ENCODE measurements at regions of chr1 and their contacts with region 1.

Region 1: GRCh38 chr1:17922833-17923232 is 167.7 kb downstream of the ACTL8 start:
- H3K4me3 ChIP-seq: no peak overlapping the region
- H3K27ac ChIP-seq: no peak overlapping the region
- H3K4me1 ChIP-seq: no peaks in the 10 kb centered on the region
- CTCF ChIP-seq: peak; percentile 23; the same call in 1 of the 2 replicates

Region 2: GRCh38 chr1:17909634-17910033 is 13.2 kb before region 1 on chr1:
- CTCF ChIA-PET with region 1: interaction called, 14 read pairs
- POLR2A ChIA-PET with region 1: no interaction called
- H3K4me3 ChIP-seq: no peak overlapping the region
- H3K27ac ChIP-seq: no peak overlapping the region
- H3K4me1 ChIP-seq: 0 out of 2 replicates have a peak, but pooled peaks cover 4% of the 10 kb centered on the region
- CTCF ChIP-seq: 0 out of 2 replicates have a peak, but pooled peaks have one; percentile 9

Region 3: DNA sequence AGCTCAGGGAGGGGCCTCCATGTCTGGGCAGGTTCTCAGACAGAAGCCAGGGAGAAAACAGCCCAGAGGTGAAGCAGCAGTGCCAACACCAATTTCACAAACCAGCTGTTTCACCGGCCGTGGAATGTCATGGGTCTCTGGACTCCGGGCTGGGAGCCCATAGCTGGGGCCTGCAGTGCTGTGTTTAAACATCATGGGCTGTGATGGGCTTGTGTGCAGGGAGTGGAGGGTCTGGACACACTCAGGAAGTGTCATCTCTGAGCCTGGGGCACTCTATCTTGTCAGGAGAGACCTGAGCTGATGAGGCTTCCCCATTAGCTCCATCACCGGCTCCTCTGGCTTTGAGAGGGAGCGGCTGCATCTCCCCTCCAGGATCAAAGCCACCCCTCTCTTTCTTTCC is 11.1 kb after region 1 on chr1:
- CTCF ChIA-PET with region 1: interaction called, 10 read pairs
- POLR2A ChIA-PET with region 1: no interaction called
- H3K4me3 ChIP-seq: no peak overlapping the region
- H3K27ac ChIP-seq: no peak overlapping the region
- H3K4me1 ChIP-seq: no peaks in the 10 kb centered on the region
- CTCF ChIP-seq: no peak

Region 4: DNA sequence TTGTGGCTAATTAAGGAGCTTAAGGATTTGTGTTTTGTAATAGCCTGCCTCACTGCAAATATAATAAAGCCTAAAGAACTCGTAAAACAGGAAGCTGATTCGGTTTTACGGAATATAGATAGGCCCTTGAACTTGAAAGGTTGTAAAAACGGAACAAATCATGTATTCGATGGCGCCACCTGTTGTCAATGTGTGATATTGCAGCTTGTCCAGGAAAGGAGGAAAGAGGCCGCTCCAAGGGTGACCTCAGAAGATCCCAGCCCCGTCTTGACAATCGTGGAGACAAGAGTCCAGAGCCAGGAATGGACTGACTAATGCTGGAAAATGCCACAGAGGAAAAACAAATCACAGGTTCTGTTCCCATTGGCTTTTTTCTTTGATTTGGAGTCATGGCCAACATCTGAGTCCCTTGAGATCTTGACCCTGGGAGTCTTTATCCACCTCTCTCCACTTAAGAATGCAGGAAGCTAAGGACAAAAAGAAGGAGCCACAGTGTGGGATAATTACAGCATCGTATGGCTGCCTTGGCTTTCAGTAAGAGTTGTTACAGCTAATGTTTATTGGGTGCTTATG is 177.7 kb after region 1 on chr1:
- CTCF ChIA-PET with region 1: interaction called, 14 read pairs
- POLR2A ChIA-PET with region 1: no interaction called
- H3K4me3 ChIP-seq: no peak overlapping the region
- H3K27ac ChIP-seq: no peak overlapping the region
- H3K4me1 ChIP-seq: no peaks in the 10 kb centered on the region
- CTCF ChIP-seq: no peak

Region 5: GRCh38 chr1:18160290-18160942 is 237.6 kb after region 1 on chr1:
- CTCF ChIA-PET with region 1: no interaction called
- POLR2A ChIA-PET with region 1: no interaction called
- H3K4me3 ChIP-seq: no peak overlapping the region
- H3K27ac ChIP-seq: no peak overlapping the region
- H3K4me1 ChIP-seq: no peaks in the 10 kb centered on the region
- CTCF ChIP-seq: no peak